ENCODE measurements at regions of chr1 and their contacts with region 1.

Region 1: GRCh38 chr1:206982216-206982615 is 12.0 kb upstream of the FCAMR start:
- DNase-seq: peak; percentile 27
- ATAC-seq: peak; percentile 95
- H3K4me3 ChIP-seq: no peak overlapping the region
- H3K27ac ChIP-seq: no peak overlapping the region
- H3K4me1 ChIP-seq: no peaks in the 10 kb centered on the region
- H3K27me3 ChIP-seq: no peaks in the 10 kb centered on the region
- CTCF ChIP-seq: peak; percentile 77 to 87 (median 87)
- POLR2A ChIP-seq: no peak
- RAD21 ChIP-seq: peak; percentile 89

Region 2: DNA sequence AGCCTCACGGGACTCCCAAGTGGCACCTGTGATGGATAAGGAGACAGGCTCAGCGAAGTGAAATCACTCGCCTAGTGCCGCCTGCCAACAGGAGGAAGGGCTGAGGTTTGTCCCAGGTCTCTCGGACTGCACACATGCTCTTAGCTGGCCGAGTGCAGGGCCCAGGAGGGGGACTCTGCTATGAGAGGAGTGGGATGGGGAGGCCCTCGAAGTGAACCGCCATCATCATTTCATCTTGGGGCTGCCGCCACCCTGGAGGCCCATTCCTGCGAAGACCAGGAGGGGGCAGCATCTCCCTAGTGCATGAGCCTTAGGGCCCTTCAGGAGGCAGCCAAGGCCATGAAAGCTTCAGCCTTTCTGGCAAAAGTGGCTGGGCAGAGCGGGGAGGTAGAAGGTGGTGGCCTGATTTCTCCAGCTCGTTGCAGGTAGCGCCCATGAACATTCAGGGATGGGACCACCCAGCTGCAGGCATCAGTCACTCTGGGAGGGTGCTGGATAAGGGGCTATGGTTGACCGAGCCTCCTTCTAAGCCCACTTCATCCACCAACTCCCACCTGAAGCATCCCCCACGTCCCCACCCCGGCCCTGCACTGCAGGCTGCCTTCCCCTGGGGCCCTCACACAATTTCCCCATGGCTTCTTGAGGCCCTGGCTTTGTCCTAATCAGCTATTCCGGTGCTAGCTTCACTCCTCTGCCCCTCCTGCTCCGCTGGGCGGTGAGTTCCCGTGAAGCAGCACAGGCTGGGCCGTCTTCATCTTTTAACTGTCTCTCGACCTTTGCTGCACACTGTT is 492.0 kb before region 1 on chr1:
- CTCF ChIA-PET with region 1: interaction called, 4 read pairs
- POLR2A ChIA-PET with region 1: no interaction called
- RAD21 ChIA-PET with region 1: interaction called, 3 read pairs
- intact Hi-C with region 1: loop called (anchors 5 kb)
- DNase-seq: no peak
- ATAC-seq: peak; percentile 96
- H3K4me3 ChIP-seq: no peak overlapping the region
- H3K27ac ChIP-seq: no peak overlapping the region
- H3K4me1 ChIP-seq: no peaks in the 10 kb centered on the region
- H3K27me3 ChIP-seq: no peaks in the 10 kb centered on the region
- CTCF ChIP-seq: peak; percentile 94 to 98 (median 94)
- POLR2A ChIP-seq: no peak
- RAD21 ChIP-seq: peak; percentile 99

Region 3: GRCh38 chr1:206663832-206664652 is 318.2 kb before region 1 on chr1:
- CTCF ChIA-PET with region 1: interaction called, 10 read pairs
- POLR2A ChIA-PET with region 1: no interaction called
- RAD21 ChIA-PET with region 1: no interaction called
- intact Hi-C with region 1: no loop called
- DNase-seq: peak; percentile 62
- ATAC-seq: peak; percentile 88
- H3K4me3 ChIP-seq: no peak overlapping the region
- H3K27ac ChIP-seq: no peak overlapping the region
- H3K4me1 ChIP-seq: no peaks in the 10 kb centered on the region
- H3K27me3 ChIP-seq: peaks cover 18% of the 10 kb centered on the region; the same call in 1 of the 2 replicates
- CTCF ChIP-seq: peak; percentile 76 to 91 (median 87)
- POLR2A ChIP-seq: no peak
- RAD21 ChIP-seq: peak; percentile 87

Region 4: DNA sequence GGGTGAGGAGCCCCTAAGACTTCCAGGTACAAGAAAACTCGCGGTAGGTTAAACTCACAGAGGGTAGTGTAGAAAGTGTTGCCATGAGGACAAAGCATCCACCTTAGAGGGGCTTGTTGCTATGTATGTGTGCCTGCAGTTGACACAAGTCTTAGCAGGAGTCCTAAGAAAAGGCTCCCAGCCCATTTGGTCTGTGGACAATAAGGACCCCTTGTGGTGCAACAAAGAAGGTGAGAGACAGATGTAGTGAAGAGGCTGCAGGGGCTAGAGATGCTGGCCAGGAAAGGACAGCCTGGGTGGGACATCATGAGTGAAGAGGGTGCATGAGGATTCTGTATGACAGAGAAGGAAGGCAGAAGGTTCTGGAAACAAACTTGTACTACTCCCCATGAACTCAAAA is 173.6 kb before region 1 on chr1:
- CTCF ChIA-PET with region 1: interaction called, 15 read pairs
- POLR2A ChIA-PET with region 1: no interaction called
- RAD21 ChIA-PET with region 1: interaction called, 3 to 5 read pairs
- intact Hi-C with region 1: no loop called
- DNase-seq: no peak
- ATAC-seq: peak; percentile 68
- H3K4me3 ChIP-seq: no peak overlapping the region
- H3K27ac ChIP-seq: no peak overlapping the region
- H3K4me1 ChIP-seq: no peaks in the 10 kb centered on the region
- H3K27me3 ChIP-seq: peaks cover 12% of the 10 kb centered on the region
- CTCF ChIP-seq: peak; percentile 24 to 44 (median 38); a peak in 5 of 6 replicates
- POLR2A ChIP-seq: no peak
- RAD21 ChIP-seq: peak; percentile 60

Region 5: GRCh38 chr1:206935491-206936067 is 46.6 kb before region 1 on chr1:
- CTCF ChIA-PET with region 1: interaction called, 12 read pairs
- POLR2A ChIA-PET with region 1: no interaction called
- RAD21 ChIA-PET with region 1: interaction called in 1 of 2 experiments, 3 read pairs
- intact Hi-C with region 1: no loop called
- DNase-seq: no peak
- ATAC-seq: peak; percentile 84
- H3K4me3 ChIP-seq: no peak overlapping the region
- H3K27ac ChIP-seq: no peak overlapping the region
- H3K4me1 ChIP-seq: no peaks in the 10 kb centered on the region
- H3K27me3 ChIP-seq: no peaks in the 10 kb centered on the region
- CTCF ChIP-seq: peak; percentile 77 to 90 (median 87)
- POLR2A ChIP-seq: no peak
- RAD21 ChIP-seq: peak; percentile 47

Measured in HCT116 (cell line).